Head of caudate nucleus (tissue), 42 donors: ENCODE measurements at regions of chr19 and their contacts with region 1.

Region 1: DNA sequence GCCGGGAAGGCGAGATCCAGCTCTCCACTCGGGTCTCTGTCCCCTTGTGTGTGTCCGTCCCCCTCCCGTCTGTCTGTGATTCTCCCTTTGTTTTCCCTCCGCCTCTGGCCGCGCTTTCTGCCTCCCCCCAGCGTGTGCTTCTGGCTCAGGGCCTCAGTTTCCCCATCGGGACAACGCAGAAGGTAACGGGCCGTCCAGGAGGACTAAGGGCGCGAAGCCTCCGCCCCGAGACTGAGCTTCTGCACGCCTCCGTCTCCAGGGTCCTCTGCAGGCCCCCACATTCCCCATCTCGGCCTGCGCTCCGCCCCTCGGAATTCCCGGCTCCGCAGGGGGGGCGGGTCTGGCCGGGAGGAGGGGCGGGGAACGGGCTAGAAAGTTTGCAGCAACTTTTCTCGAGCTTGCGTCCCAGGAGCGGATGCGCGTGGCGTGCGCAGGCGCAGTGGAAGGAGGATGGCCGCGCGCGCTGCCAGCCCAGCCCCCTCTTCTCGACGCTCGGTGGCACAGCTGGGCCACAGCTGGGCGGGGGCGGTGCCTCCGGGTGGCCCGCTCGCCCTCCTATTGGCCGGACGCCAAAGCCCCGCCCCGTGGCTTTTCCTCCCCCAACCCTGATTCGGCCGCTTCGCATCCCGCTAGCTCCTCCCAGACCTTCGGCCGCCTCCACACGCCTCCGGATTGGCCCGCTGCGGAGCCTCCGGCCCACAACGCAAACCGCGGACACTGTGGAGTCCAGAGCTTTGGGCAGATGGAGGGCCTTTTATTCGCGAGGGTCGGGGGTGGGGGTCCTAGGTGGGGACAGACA is at the start of gene SIX5:
- DNase-seq: peak; percentile 87 to 99 (median 98)

Region 2: GRCh38 chr19:45729774-45730388 is 39.3 kb before region 1 on chr19:
- intact Hi-C with region 1: loop called (anchors 5 kb)
- DNase-seq: peak in 15 of 42 donors; percentile 11 to 61 (median 34)

Region 3: GRCh38 chr19:45798995-45799517 is 29.9 kb after region 1 on chr19:
- intact Hi-C with region 1: loop called (anchors 2 kb)
- DNase-seq: peak in 38 of 42 donors; percentile 34 to 87 (median 64)